HEK293T (cell line): ENCODE measurements at regions of chr1 and their contacts with region 1.

Region 1: DNA sequence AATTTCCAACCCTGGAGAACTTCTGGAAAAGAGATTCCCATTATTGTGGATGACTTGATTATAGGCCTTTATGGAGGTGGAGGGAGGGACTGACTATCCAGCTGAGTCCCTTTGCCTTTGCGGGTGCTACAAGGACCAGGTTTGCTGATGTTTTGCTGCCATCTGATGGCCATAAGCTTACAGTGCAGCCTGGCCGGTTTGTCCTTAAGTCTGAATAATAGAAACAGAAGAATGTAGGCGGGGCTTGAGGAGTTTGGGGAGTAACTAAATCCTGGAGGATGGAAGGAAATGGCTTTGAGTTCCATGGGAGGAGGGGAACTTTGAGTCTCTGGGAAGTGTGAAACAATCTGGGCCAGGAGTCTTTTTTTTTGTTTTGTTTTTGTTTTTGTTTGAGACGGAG is 55.7 kb upstream of the CD1D start:
- DNase-seq: peak; percentile 87

Region 2: GRCh38 chr1:157963713-157964112 is 161.3 kb before region 1 on chr1:
- CTCF ChIA-PET with region 1: interaction called, 145 read pairs
- POLR2A ChIA-PET with region 1: interaction called, 3 read pairs
- DNase-seq: peak; percentile 85

Region 3: GRCh38 chr1:157969697-157970485 is 155.1 kb before region 1 on chr1:
- CTCF ChIA-PET with region 1: interaction called, 145 read pairs
- POLR2A ChIA-PET with region 1: no interaction called
- DNase-seq: peak; percentile 73

Region 4: GRCh38 chr1:158095737-158096335 is 29.2 kb before region 1 on chr1:
- CTCF ChIA-PET with region 1: interaction called, 15 read pairs
- POLR2A ChIA-PET with region 1: no interaction called
- DNase-seq: peak; percentile 73

Region 5: GRCh38 chr1:158103861-158104522 is 21.0 kb before region 1 on chr1:
- CTCF ChIA-PET with region 1: interaction called, 14 read pairs
- POLR2A ChIA-PET with region 1: no interaction called
- DNase-seq: no peak